ENCODE measurements at regions of chr18 and their contacts with region 1.

Region 1: DNA sequence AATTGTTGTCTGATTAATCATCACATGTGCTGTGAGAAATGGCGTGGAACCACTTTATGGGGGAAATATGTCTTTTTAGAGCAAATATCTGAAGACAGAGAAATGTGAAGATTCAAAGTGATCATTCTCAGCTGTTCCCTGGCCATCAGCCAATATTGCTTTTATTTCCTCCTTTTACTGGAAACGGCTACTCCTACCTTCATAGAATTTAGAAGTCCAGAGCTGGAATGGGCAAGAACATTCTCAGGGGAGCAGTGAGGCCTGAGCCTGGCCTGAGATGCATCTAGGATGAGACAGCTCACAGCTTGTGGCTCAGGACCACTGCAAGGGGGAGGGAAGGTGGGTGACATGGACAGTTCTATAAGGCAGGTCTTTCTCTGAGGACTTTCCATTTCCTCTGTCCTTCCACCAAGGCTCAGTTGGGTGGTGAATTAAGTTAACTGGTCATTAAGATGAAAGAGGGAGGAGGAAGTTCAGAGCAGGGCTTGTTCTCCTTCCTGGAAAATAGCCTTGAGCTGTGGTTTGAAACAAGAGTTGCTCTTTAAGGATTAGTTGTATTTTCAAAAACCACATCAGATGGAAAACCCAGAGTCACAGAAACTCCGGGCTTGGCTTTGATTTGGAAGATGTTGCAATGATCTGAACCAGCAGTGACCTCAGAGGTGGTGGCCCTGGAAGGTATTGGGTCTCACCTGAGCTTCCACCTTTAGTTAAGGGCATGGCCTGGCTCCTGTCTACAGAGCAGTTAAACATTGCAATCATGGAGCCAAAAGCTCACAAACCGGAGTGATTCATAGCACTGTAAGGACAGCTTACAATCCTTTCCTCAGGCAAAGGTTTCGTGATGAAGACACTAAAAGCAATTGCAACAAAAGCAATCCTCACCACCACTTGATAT is 144.3 kb downstream of the VAPA start:
- DNase-seq: no peak
- H3K4me3 ChIP-seq: no peak overlapping the region
- H3K27ac ChIP-seq: peak overlapping the region; percentile 23 to 62 (median 46)
- H3K4me1 ChIP-seq: peaks cover 0 to 59% (median 53%) of the 10 kb centered on the region in 4 donors
- H3K27me3 ChIP-seq: no peaks in the 10 kb centered on the region
- CTCF ChIP-seq: no peak
- EP300 ChIP-seq: peak in 1 of 4 donors; percentile 12
- POLR2A ChIP-seq: no peak

Region 2: DNA sequence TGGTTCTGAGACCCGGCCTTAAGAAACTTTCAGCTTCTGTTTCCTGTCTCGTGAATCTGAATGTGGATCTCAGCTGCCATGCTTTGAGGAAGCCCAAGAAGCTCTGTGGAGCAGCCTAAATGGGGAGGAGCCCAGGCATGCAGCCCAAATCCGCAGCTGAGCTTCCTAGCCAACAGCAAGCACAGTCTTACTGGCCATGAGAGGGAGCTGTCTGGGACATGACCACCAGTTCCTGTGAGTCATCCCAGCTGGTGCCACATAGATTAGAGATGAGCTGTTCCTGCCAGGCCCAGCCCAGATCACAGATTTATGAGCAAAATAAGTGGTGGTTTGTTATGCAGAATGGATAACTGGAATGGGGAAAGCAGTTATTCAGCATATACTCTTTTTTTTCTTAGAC is 171.9 kb after region 1 on chr18:
- intact Hi-C with region 1: loop called (anchors 10 kb)
- DNase-seq: no peak
- H3K4me3 ChIP-seq: no peak overlapping the region
- H3K27ac ChIP-seq: no peak overlapping the region
- H3K4me1 ChIP-seq: peaks cover 0 to 11% (median 10%) of the 10 kb centered on the region in 4 donors
- H3K27me3 ChIP-seq: no peaks in the 10 kb centered on the region
- CTCF ChIP-seq: no peak
- EP300 ChIP-seq: no peak
- POLR2A ChIP-seq: no peak

Region 3: GRCh38 chr18:10329101-10329500 is 271.0 kb after region 1 on chr18:
- intact Hi-C with region 1: no loop called
- DNase-seq: no peak
- H3K4me3 ChIP-seq: no peak overlapping the region
- H3K27ac ChIP-seq: no peak overlapping the region
- H3K4me1 ChIP-seq: no peaks in the 10 kb centered on the region
- H3K27me3 ChIP-seq: no peaks in the 10 kb centered on the region
- CTCF ChIP-seq: no peak
- EP300 ChIP-seq: no peak
- POLR2A ChIP-seq: no peak

Region 4: DNA sequence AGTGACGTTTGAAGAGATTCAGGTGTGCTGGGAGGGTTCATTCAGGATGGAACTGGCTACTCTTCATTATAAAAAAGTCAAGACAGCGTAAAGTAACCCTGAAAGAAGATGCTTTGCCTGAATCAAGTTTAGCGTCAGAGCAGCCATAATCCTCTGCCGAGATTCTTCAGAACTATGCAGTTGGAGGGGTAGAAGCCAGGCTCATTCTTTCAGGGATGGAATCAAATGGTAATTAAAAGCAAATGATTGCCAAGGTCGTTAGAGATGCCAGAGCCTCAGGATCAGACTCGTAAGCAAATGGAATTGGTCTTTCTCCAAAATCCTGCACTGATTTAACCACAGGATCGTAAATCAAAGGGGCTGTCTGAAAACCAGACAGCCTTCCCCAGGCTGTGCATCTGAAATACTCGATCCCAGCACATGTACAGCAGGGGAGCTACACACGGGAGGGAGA is 418.2 kb after region 1 on chr18:
- intact Hi-C with region 1: no loop called
- DNase-seq: no peak
- H3K4me3 ChIP-seq: no peak overlapping the region
- H3K27ac ChIP-seq: no peak overlapping the region
- H3K4me1 ChIP-seq: peaks cover 0 to 20% (median 16%) of the 10 kb centered on the region in 4 donors
- H3K27me3 ChIP-seq: peaks cover 0 to 4% (median 0%) of the 10 kb centered on the region in 3 donors
- CTCF ChIP-seq: no peak
- EP300 ChIP-seq: no peak
- POLR2A ChIP-seq: no peak

Measured in sigmoid colon (tissue), 7 donors.